Sigmoid colon (tissue), 7 donors: ENCODE measurements at regions of chr2 and their contacts with region 1.

Region 1: GRCh38 chr2:78979380-78980151 is 45.9 kb upstream of the REG3G start:
- DNase-seq: no peak
- H3K4me3 ChIP-seq: no peak overlapping the region
- H3K27ac ChIP-seq: no peak overlapping the region
- H3K4me1 ChIP-seq: peaks cover 0 to 4% (median 0%) of the 10 kb centered on the region in 4 donors
- H3K27me3 ChIP-seq: no peaks in the 10 kb centered on the region
- CTCF ChIP-seq: peak; percentile 22 to 70 (median 58)
- EP300 ChIP-seq: no peak
- POLR2A ChIP-seq: no peak

Region 2: GRCh38 chr2:78351208-78351607 is 628.4 kb before region 1 on chr2:
- intact Hi-C with region 1: loop called (anchors 10 kb)
- DNase-seq: no peak
- H3K4me3 ChIP-seq: no peak overlapping the region
- H3K27ac ChIP-seq: no peak overlapping the region
- H3K4me1 ChIP-seq: no peaks in the 10 kb centered on the region
- H3K27me3 ChIP-seq: no peaks in the 10 kb centered on the region
- CTCF ChIP-seq: peak in 1 of 4 experiments; percentile 11
- EP300 ChIP-seq: no peak
- POLR2A ChIP-seq: no peak

Region 3: DNA sequence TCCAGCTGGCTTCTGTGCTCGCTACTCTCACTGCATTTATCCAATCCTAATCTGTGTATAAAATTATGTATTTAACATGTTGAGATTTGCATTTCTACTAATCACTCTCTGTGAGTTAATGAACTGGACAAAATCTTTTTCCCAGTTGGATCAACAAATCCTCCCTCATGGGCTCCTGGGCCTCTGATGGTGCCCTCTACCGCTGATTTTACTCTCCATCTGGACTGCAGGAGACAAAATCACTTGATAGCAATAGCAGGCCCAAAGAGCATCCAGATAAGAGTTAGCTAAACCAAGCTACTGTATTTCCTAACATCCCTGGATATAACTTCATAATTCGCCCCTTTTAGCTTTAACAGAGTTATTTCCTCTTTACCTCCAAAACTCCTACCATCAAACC is 60.4 kb after region 1 on chr2:
- intact Hi-C with region 1: no loop called
- DNase-seq: no peak
- H3K4me3 ChIP-seq: no peak overlapping the region
- H3K27ac ChIP-seq: no peak overlapping the region
- H3K4me1 ChIP-seq: no peaks in the 10 kb centered on the region
- H3K27me3 ChIP-seq: no peaks in the 10 kb centered on the region
- CTCF ChIP-seq: no peak
- EP300 ChIP-seq: no peak
- POLR2A ChIP-seq: no peak

Region 4: GRCh38 chr2:79171348-79171958 is 191.9 kb after region 1 on chr2:
- intact Hi-C with region 1: no loop called
- DNase-seq: no peak
- H3K4me3 ChIP-seq: no peak overlapping the region
- H3K27ac ChIP-seq: no peak overlapping the region
- H3K4me1 ChIP-seq: no peaks in the 10 kb centered on the region
- H3K27me3 ChIP-seq: no peaks in the 10 kb centered on the region
- CTCF ChIP-seq: no peak
- EP300 ChIP-seq: no peak
- POLR2A ChIP-seq: no peak